Caco-2 (cell line): ENCODE measurements at regions of chr2 and their contacts with region 1.

Region 1: GRCh38 chr2:28392297-28393113 is at the start of gene FOSL2:
- DNase-seq: peak; percentile 98 to 99
- H3K4me3 ChIP-seq: peak within 1 kb of the TSS; percentile 69
- H3K4me3 Mint-ChIP-seq: no peak within 1 kb of the TSS
- H3K27ac Mint-ChIP-seq: peak within 1 kb of the TSS; percentile 95
- H3K4me1 ChIP-seq: peaks cover 36% of the 10 kb centered on the region
- H3K4me1 Mint-ChIP-seq: peaks cover 14% of the 10 kb centered on the region
- H3K27me3 ChIP-seq: no peaks in the 10 kb centered on the region
- H3K27me3 Mint-ChIP-seq: no peaks in the 10 kb centered on the region
- CTCF ChIP-seq: no peak
- total RNA-seq, gene FOSL2: 64.6 and 70.7 TPM in 2 replicates

Region 2: GRCh38 chr2:27703638-27704341 is 688.7 kb before region 1 on chr2:
- CTCF ChIA-PET with region 1: interaction called, 3 read pairs
- POLR2A ChIA-PET with region 1: interaction called, 10 read pairs
- intact Hi-C with region 1: loop called (anchors 2 kb)
- DNase-seq: peak; percentile 90 to 93
- H3K4me3 ChIP-seq: no peak overlapping the region
- H3K4me3 Mint-ChIP-seq: peak overlapping the region; percentile 34
- H3K27ac Mint-ChIP-seq: peak overlapping the region; percentile 20
- H3K4me1 ChIP-seq: peaks cover 65% of the 10 kb centered on the region
- H3K4me1 Mint-ChIP-seq: peaks cover 48% of the 10 kb centered on the region
- H3K27me3 ChIP-seq: no peaks in the 10 kb centered on the region
- H3K27me3 Mint-ChIP-seq: no peaks in the 10 kb centered on the region
- CTCF ChIP-seq: peak; percentile 88 to 91

Region 3: DNA sequence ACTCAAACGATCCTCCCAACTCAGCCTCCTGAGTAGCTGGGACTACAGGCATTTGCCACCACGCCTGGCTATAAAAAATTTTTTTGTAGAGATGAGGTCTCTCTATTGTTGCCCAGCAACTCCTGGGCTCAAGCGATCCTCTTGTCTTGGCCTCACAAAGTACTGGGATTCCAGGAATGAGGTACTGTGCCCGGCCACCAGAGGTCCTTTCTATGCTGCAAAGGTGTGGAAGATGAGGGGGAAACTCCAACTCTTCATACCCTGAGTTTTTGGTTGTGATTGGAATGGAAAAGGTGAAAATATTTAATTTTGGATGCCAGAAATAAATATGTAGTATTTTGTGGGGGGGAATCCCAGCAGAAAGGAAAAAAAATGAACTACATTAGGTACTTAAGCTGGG is 585.0 kb before region 1 on chr2:
- CTCF ChIA-PET with region 1: interaction called, 3 read pairs
- POLR2A ChIA-PET with region 1: no interaction called
- intact Hi-C with region 1: loop called (anchors 2 kb)
- DNase-seq: peak; percentile 55 to 59
- H3K4me3 ChIP-seq: no peak overlapping the region
- H3K4me3 Mint-ChIP-seq: no peak overlapping the region
- H3K27ac Mint-ChIP-seq: no peak overlapping the region
- H3K4me1 ChIP-seq: peaks cover 16% of the 10 kb centered on the region; the same call in 1 of the 2 replicates
- H3K4me1 Mint-ChIP-seq: no peaks in the 10 kb centered on the region
- H3K27me3 ChIP-seq: no peaks in the 10 kb centered on the region
- H3K27me3 Mint-ChIP-seq: no peaks in the 10 kb centered on the region
- CTCF ChIP-seq: peak; percentile 48 to 66

Region 4: DNA sequence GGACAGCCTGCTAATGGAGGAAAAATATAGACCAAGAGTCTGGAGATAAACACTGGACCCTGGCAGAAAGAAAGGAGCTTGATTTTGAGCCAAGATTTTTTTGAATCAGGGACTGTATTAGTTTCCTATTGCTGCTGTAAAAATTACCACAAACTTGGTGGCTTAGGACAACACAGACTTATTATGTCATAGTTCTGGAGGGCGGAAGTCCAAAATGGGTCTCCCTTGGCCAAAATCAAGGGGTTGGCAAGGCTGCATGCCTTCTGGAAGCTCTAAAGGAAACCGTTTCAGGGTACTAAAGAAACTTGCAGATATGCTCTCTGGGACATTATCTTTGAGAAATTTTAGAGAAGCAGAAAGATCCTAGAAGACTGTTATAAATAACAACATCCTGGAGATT is 361.9 kb before region 1 on chr2:
- CTCF ChIA-PET with region 1: no interaction called
- POLR2A ChIA-PET with region 1: no interaction called
- intact Hi-C with region 1: no loop called
- DNase-seq: no peak
- H3K4me3 ChIP-seq: no peak overlapping the region
- H3K4me3 Mint-ChIP-seq: no peak overlapping the region
- H3K27ac Mint-ChIP-seq: no peak overlapping the region
- H3K4me1 ChIP-seq: no peaks in the 10 kb centered on the region
- H3K4me1 Mint-ChIP-seq: no peaks in the 10 kb centered on the region
- H3K27me3 ChIP-seq: no peaks in the 10 kb centered on the region
- H3K27me3 Mint-ChIP-seq: no peaks in the 10 kb centered on the region
- CTCF ChIP-seq: no peak

Region 5: GRCh38 chr2:28068088-28068487 is 324.4 kb before region 1 on chr2:
- CTCF ChIA-PET with region 1: no interaction called
- POLR2A ChIA-PET with region 1: no interaction called
- intact Hi-C with region 1: loop called (anchors 5 kb)
- DNase-seq: peak in 1 of 2 experiments; percentile 37
- H3K4me3 ChIP-seq: no peak overlapping the region
- H3K4me3 Mint-ChIP-seq: no peak overlapping the region
- H3K27ac Mint-ChIP-seq: no peak overlapping the region
- H3K4me1 ChIP-seq: peaks cover 19% of the 10 kb centered on the region
- H3K4me1 Mint-ChIP-seq: peaks cover 7% of the 10 kb centered on the region
- H3K27me3 ChIP-seq: no peaks in the 10 kb centered on the region
- H3K27me3 Mint-ChIP-seq: no peaks in the 10 kb centered on the region
- CTCF ChIP-seq: no peak

Region 6: DNA sequence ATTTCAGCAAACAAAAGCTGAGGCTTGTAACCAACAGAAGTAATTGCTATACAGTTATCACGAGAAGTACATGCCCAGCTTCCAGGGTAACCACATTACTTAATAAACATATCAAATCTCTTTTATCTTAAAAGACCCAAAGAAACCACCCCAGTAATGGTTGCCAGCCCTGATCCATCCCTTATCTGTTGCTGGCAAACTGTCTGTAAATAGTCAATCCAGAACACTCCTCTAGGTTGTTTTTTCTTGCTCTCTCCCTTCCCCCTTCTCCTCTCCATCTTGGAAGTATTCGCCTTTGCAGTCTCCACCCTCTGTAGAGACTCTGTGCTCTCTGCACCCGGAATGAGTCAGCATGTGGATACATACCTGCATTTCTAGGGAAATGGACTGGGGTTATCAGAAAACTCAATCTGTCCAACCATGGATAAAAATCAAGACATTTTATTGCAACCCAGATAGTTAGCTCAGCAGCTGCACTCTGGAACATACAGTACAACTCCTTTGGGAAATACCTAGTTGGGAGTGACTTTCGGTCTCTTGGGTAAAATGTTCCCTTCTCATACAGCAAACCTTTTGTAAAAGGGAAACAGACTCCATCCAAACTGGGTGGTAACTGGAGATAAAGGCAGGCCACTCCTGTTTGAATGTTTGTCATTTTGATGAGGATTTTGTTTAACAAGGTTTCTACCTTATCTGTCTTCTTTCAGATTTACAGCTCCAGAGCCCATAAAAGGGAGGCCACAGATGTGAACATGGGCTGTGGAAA is 123.3 kb before region 1 on chr2:
- CTCF ChIA-PET with region 1: interaction called, 5 read pairs
- POLR2A ChIA-PET with region 1: interaction called, 21 read pairs
- intact Hi-C with region 1: loop called (anchors 1 kb)
- DNase-seq: peak; percentile 89 to 95
- H3K4me3 ChIP-seq: no peak overlapping the region
- H3K4me3 Mint-ChIP-seq: peak overlapping the region; percentile 72
- H3K27ac Mint-ChIP-seq: peak overlapping the region; percentile 94
- H3K4me1 ChIP-seq: peaks cover 59% of the 10 kb centered on the region
- H3K4me1 Mint-ChIP-seq: peaks cover 60% of the 10 kb centered on the region
- H3K27me3 ChIP-seq: no peaks in the 10 kb centered on the region
- H3K27me3 Mint-ChIP-seq: no peaks in the 10 kb centered on the region
- CTCF ChIP-seq: no peak

Region 7: GRCh38 chr2:28419443-28420270 is 27.2 kb after region 1 on chr2:
- CTCF ChIA-PET with region 1: interaction called, 3 read pairs
- POLR2A ChIA-PET with region 1: interaction called, 4 read pairs
- intact Hi-C with region 1: loop called (anchors 1 kb)
- DNase-seq: peak; percentile 85 to 86
- H3K4me3 ChIP-seq: no peak overlapping the region
- H3K4me3 Mint-ChIP-seq: peak overlapping the region; percentile 52
- H3K27ac Mint-ChIP-seq: peak overlapping the region; percentile 93
- H3K4me1 ChIP-seq: peaks cover 23% of the 10 kb centered on the region
- H3K4me1 Mint-ChIP-seq: peaks cover 19% of the 10 kb centered on the region
- H3K27me3 ChIP-seq: no peaks in the 10 kb centered on the region
- H3K27me3 Mint-ChIP-seq: no peaks in the 10 kb centered on the region
- CTCF ChIP-seq: peak; percentile 32 to 47